ENCODE measurements at regions of chr5 and their contacts with region 1.

Region 1: DNA sequence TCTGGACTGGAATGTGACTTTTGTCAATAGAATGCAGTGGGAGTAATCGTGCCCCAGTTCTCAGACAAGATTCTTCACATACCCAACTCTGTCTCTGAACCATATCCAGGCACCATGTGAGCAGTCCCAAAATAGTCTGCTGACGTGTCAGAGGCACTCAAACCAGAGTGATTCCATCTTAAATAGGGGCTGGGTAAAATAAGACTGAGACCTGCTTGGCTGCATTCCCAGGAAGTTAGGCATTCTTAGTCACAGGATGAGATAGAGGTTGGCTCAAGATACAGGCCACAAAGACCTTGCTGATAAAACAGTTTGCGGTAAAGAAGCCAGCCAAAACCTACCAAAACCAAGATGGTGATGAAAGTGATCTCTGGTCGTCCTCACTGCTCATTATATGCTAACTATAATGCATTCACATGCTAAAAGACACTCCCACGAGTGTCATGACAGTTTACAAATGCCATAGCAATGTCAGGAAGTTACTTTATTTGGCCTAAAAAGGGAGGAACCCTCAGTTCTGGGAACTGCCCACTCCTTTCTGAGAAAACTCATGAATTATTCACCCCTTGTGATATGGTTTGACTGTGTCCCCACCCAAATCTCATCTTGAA is 16.9 kb upstream of the PLCXD3 start:
- DNase-seq: peak; percentile 82 to 90
- H3K4me3 ChIP-seq: no peak overlapping the region
- H3K4me3 Mint-ChIP-seq: peak overlapping the region; percentile 46
- H3K27ac Mint-ChIP-seq: peak overlapping the region; percentile 78
- H3K4me1 ChIP-seq: peaks cover 43% of the 10 kb centered on the region
- H3K4me1 Mint-ChIP-seq: peaks cover 27% of the 10 kb centered on the region
- H3K27me3 ChIP-seq: no peaks in the 10 kb centered on the region
- H3K27me3 Mint-ChIP-seq: no peaks in the 10 kb centered on the region
- CTCF ChIP-seq: no peak

Region 2: GRCh38 chr5:40784027-40784653 is 743.2 kb before region 1 on chr5:
- CTCF ChIA-PET with region 1: no interaction called
- POLR2A ChIA-PET with region 1: no interaction called
- intact Hi-C with region 1: loop called (anchors 2 kb)
- DNase-seq: peak; percentile 80 to 90
- H3K4me3 ChIP-seq: no peak overlapping the region
- H3K4me3 Mint-ChIP-seq: peak overlapping the region; percentile 61
- H3K27ac Mint-ChIP-seq: peak overlapping the region; percentile 67
- H3K4me1 ChIP-seq: peaks cover 46% of the 10 kb centered on the region
- H3K4me1 Mint-ChIP-seq: peaks cover 31% of the 10 kb centered on the region
- H3K27me3 ChIP-seq: no peaks in the 10 kb centered on the region
- H3K27me3 Mint-ChIP-seq: no peaks in the 10 kb centered on the region
- CTCF ChIP-seq: no peak

Region 3: DNA sequence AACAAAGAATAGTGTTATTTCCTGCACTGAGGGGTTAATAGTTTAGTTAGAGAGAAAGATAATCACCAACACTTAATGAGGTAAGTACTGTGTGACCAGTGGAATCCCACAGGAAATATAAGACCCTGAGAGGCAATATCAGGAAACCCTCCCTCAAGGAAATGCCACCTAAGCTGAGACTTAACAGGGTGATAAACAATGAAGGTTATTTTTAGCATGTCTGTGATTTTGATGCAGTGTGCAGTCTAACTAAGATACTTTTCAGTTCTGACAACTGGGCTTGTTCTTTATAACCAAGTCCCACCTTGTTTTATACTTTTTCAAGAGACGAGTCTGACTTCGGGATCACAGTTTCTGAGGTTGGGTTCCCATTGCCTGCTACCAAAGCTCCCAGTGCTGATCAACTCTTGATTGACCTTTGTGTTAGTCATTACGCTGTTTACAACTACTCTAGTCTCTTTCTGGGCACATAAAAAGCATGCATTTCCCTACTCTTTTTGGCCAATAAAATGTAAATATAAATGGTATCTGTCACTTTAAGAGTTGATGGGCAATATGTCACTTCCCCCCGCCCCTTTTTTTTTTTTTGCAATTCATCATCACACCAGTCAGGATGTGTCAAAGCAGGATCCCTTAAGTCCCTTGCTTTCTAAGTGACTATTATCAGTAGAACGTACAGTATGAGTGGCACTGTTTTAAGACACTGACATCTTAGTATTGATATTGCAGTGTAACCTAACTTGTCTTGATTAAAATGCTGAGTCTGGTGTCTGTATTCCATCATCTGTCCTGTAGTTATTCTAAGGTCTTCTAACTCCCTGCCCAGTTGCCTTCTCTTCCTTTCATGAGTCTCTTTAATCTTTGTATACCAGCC is 345.4 kb before region 1 on chr5:
- CTCF ChIA-PET with region 1: no interaction called
- POLR2A ChIA-PET with region 1: no interaction called
- intact Hi-C with region 1: loop called (anchors 1 kb)
- DNase-seq: no peak
- H3K4me3 ChIP-seq: no peak overlapping the region
- H3K4me3 Mint-ChIP-seq: peak overlapping the region; percentile 13
- H3K27ac Mint-ChIP-seq: peak overlapping the region; percentile 20
- H3K4me1 ChIP-seq: peaks cover 25% of the 10 kb centered on the region
- H3K4me1 Mint-ChIP-seq: peaks cover 16% of the 10 kb centered on the region
- H3K27me3 ChIP-seq: no peaks in the 10 kb centered on the region
- H3K27me3 Mint-ChIP-seq: no peaks in the 10 kb centered on the region
- CTCF ChIP-seq: no peak

Region 4: DNA sequence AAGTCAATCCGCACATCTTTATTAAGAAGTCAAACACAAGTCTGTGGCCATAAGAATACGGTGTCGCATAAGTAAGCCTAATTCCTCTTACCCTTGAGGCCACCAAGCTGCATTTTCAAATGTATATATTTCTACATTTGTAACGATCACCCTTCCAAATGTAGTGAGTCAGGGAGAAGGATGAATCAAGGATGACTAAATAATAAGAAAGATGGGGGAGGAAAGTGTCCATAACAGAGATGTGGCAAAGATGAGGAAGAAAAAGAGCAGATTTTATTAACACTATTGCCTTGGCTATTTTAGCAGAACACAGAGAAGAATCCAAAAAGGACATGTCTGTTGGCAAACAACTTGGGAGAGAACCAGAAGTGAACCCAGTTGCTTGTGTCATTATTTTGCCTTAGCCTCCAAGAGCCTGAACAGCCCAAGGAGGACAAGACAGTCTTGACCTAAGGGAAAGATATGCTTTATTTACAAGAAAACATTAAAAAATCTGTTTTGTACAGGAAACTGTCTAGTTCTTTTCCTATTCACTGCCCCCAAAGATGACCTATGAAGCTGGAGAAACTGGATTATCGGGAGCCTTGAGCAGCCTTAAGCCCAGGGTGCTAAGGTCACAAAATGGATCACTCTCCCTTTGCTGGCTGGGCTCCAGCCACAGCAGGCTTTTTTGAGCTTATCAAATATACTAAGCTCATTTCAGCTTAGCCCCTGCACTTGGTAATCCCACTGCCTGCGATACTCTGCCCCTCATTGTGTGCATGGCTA is 118.4 kb before region 1 on chr5:
- CTCF ChIA-PET with region 1: no interaction called
- POLR2A ChIA-PET with region 1: no interaction called
- intact Hi-C with region 1: loop called (anchors 1 kb)
- DNase-seq: peak in 1 of 2 experiments; percentile 4
- H3K4me3 ChIP-seq: no peak overlapping the region
- H3K4me3 Mint-ChIP-seq: no peak overlapping the region
- H3K27ac Mint-ChIP-seq: peak overlapping the region; percentile 33
- H3K4me1 ChIP-seq: peaks cover 56% of the 10 kb centered on the region
- H3K4me1 Mint-ChIP-seq: peaks cover 42% of the 10 kb centered on the region
- H3K27me3 ChIP-seq: no peaks in the 10 kb centered on the region
- H3K27me3 Mint-ChIP-seq: no peaks in the 10 kb centered on the region
- CTCF ChIP-seq: no peak

Region 5: DNA sequence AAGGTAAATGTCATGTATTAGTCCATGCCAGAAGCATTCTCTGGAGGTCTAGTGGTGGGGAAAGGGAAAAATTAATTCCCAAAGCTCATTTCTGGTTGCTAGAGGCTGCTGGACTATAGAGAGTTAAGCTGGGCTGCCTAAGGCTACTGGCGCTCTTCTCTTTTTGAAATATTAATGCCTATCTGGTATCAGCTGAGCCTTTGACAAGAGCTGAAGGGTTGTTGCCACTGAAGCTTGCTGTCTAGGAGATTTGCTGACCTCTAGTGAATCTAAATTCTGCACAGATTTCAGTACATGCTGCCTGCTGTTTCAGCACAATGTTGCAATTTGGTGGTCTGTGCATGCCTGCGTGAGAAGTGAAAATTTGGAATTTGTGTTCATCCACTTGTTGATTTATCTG is 12.1 kb after region 1 on chr5:
- CTCF ChIA-PET with region 1: no interaction called
- POLR2A ChIA-PET with region 1: no interaction called
- intact Hi-C with region 1: loop called (anchors 1 kb)
- DNase-seq: peak in 1 of 2 experiments; percentile 14
- H3K4me3 ChIP-seq: no peak overlapping the region
- H3K4me3 Mint-ChIP-seq: no peak overlapping the region
- H3K27ac Mint-ChIP-seq: no peak overlapping the region
- H3K4me1 ChIP-seq: no peaks in the 10 kb centered on the region
- H3K4me1 Mint-ChIP-seq: no peaks in the 10 kb centered on the region
- H3K27me3 ChIP-seq: no peaks in the 10 kb centered on the region
- H3K27me3 Mint-ChIP-seq: no peaks in the 10 kb centered on the region
- CTCF ChIP-seq: peak in 1 of 2 experiments; percentile 18

Region 6: GRCh38 chr5:41637869-41638268 is 110.6 kb after region 1 on chr5:
- CTCF ChIA-PET with region 1: interaction called, 5 read pairs
- POLR2A ChIA-PET with region 1: no interaction called
- intact Hi-C with region 1: loop called (anchors 1 kb)
- DNase-seq: no peak
- H3K4me3 ChIP-seq: no peak overlapping the region
- H3K4me3 Mint-ChIP-seq: no peak overlapping the region
- H3K27ac Mint-ChIP-seq: peak overlapping the region; percentile 7
- H3K4me1 ChIP-seq: peaks cover 32% of the 10 kb centered on the region
- H3K4me1 Mint-ChIP-seq: peaks cover 13% of the 10 kb centered on the region
- H3K27me3 ChIP-seq: no peaks in the 10 kb centered on the region
- H3K27me3 Mint-ChIP-seq: no peaks in the 10 kb centered on the region
- CTCF ChIP-seq: peak in 1 of 2 experiments; percentile 15

Measured in Caco-2 (cell line).